Heart right ventricle (tissue), 16 donors: ENCODE measurements at regions of chr3 and their contacts with region 1.

Region 1: DNA sequence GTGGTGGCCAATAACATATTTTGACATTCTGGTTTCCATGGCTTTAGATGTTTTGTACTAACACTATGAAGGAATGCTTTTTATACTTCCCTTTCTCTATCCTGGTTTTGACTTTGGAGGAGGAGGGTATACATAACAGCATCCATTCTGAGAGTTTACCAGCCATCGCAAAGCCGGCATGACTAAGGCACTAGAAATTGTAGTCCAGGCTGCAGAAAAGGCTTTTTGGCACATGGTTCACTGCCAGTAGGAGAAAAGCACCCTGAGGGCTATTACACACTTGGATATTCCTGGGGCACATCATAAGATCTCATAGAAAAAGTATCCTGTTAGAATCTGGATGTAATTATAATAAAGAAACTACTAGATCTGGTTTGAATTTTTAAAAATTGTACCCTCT is 101.8 kb downstream of the STT3B start:
- DNase-seq: no peak
- ATAC-seq: no peak
- H3K4me3 ChIP-seq: no peak overlapping the region
- H3K27ac ChIP-seq: no peak overlapping the region
- H3K4me1 ChIP-seq: peaks cover 0 to 25% (median 13%) of the 10 kb centered on the region in 9 donors
- H3K27me3 ChIP-seq: no peaks in the 10 kb centered on the region
- CTCF ChIP-seq: no peak

Region 2: DNA sequence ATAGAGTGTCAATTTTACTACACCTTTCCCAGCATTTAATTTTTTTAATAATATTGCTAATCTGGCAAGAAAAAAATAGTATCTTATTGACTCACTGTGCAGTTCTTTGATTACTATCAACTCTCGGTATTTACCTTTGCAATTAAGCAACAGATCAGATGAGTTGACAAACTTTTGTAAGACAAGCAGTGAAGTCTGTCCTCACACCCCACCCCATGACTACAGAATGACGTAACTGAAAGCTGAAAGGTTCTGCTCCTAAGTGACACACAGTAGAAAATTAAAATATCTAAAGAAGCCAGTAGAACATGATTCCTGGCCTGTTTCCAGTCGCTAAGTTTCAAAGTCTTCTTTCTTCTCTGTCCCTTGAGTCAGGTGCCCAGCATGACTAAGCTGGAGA is 33.7 kb after region 1 on chr3:
- intact Hi-C with region 1: loop called in 1 of 10 experiments (anchors 5 kb)
- DNase-seq: no peak
- ATAC-seq: no peak
- H3K4me3 ChIP-seq: no peak overlapping the region
- H3K27ac ChIP-seq: no peak overlapping the region
- H3K4me1 ChIP-seq: peaks cover 0 to 21% (median 0%) of the 10 kb centered on the region in 9 donors
- H3K27me3 ChIP-seq: no peaks in the 10 kb centered on the region
- CTCF ChIP-seq: no peak

Region 3: GRCh38 chr3:31692726-31693125 is 58.2 kb after region 1 on chr3:
- intact Hi-C with region 1: no loop called
- DNase-seq: no peak
- ATAC-seq: peak in 3 of 8 donors; percentile 14 to 45 (median 38)
- H3K4me3 ChIP-seq: no peak overlapping the region
- H3K27ac ChIP-seq: peak overlapping the region in 1 of 10 donors; percentile 6
- H3K4me1 ChIP-seq: peaks cover 0 to 16% (median 0%) of the 10 kb centered on the region in 9 donors
- H3K27me3 ChIP-seq: no peaks in the 10 kb centered on the region
- CTCF ChIP-seq: peak in 1 of 9 donors; percentile 8